ENCODE measurements at regions of chr22 and their contacts with region 1.

Region 1: GRCh38 chr22:20418211-20418788 is 19.3 kb downstream of the SCARF2 start:
- DNase-seq: peak; percentile 83
- H3K4me3 ChIP-seq: peak overlapping the region; percentile 38 to 49 (median 42)
- H3K27ac ChIP-seq: no peak overlapping the region
- H3K4me1 ChIP-seq: no peaks in the 10 kb centered on the region
- H3K27me3 ChIP-seq: peaks cover 2 to 5% of the 10 kb centered on the region in 2 experiments
- CTCF ChIP-seq: peak; percentile 82 to 92
- POLR2A ChIP-seq: no peak

Region 2: DNA sequence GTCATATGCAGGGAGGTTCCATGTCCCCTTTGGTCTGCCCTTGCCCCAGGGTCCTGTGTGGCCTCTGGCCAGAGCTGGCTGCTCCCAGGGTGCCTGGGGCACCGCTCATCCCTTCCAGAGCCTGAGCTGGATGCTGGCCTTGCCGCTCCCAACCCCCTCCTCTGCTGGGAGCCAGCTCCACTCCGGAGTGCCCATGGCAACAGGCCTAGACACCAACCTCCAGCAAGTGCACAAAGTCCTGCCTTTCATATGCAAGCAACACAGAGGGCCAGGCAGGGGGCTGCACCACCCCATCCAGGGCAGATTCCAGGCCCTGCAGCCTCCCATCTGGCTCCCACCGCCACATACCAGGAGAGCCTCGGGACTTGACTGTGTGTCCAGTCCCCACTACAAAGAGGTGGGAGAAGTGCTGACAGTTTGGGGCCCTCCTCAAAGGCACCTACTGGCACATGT is 418.1 kb before region 1 on chr22:
- CTCF ChIA-PET with region 1: no interaction called
- POLR2A ChIA-PET with region 1: no interaction called
- dilution Hi-C with region 1: no loop called
- intact Hi-C with region 1: no loop called
- DNase-seq: no peak
- H3K4me3 ChIP-seq: no peak overlapping the region
- H3K27ac ChIP-seq: peak overlapping the region; percentile 34
- H3K4me1 ChIP-seq: peaks cover 47% of the 10 kb centered on the region
- H3K27me3 ChIP-seq: no peaks in the 10 kb centered on the region
- CTCF ChIP-seq: no peak
- POLR2A ChIP-seq: no peak

Region 3: GRCh38 chr22:20016734-20017621 is 401.3 kb before region 1 on chr22 and contains the start of gene ARVCF:
- CTCF ChIA-PET with region 1: no interaction called
- POLR2A ChIA-PET with region 1: no interaction called
- dilution Hi-C with region 1: no loop called
- intact Hi-C with region 1: no loop called
- DNase-seq: peak; percentile 87
- H3K4me3 ChIP-seq: peak within 1 kb of the TSS; percentile 54 to 79 (median 70)
- H3K27ac ChIP-seq: no peak within 1 kb of the TSS
- H3K4me1 ChIP-seq: peaks cover 18% of the 10 kb centered on the region
- H3K27me3 ChIP-seq: no peaks in the 10 kb centered on the region
- CTCF ChIP-seq: peak in 1 of 2 donors; percentile 31
- POLR2A ChIP-seq: no peak
- total RNA-seq, gene ARVCF: 105 and 109 TPM in 2 replicates

Region 4: DNA sequence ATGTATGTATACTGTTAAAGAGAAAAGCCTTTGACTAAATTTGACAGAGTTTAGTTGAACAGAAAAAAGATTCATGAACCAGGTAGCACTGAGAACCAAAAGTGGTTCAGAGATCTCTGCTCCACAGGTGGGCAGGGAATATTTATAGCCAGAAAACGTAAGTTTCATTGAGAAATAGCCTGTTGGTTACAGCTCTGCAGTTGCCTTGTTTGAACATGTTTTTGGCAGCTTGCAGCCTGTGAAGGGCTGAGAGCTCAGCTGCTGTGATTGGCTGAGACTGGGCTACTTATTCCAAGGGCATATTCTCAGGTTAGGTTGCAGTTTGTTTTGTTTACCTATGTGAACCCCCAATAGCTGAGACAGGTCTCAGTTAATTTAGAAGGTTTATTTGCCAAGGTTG is 37.8 kb before region 1 on chr22:
- CTCF ChIA-PET with region 1: no interaction called
- POLR2A ChIA-PET with region 1: no interaction called
- dilution Hi-C with region 1: no loop called
- intact Hi-C with region 1: no loop called
- DNase-seq: no peak
- H3K4me3 ChIP-seq: no peak overlapping the region
- H3K27ac ChIP-seq: no peak overlapping the region
- H3K4me1 ChIP-seq: no peaks in the 10 kb centered on the region
- H3K27me3 ChIP-seq: peaks cover 6 to 16% of the 10 kb centered on the region in 2 experiments
- CTCF ChIP-seq: no peak
- POLR2A ChIP-seq: no peak

Region 5: GRCh38 chr22:20430720-20431510 is 12.6 kb after region 1 on chr22:
- CTCF ChIA-PET with region 1: interaction called, 36 read pairs
- POLR2A ChIA-PET with region 1: interaction called, 10 read pairs
- dilution Hi-C with region 1: no loop called
- intact Hi-C with region 1: no loop called
- DNase-seq: peak; percentile 44
- H3K4me3 ChIP-seq: peak overlapping the region in 1 of 3 experiments; percentile 9
- H3K27ac ChIP-seq: no peak overlapping the region
- H3K4me1 ChIP-seq: peaks cover 5% of the 10 kb centered on the region
- H3K27me3 ChIP-seq: no peaks in the 10 kb centered on the region
- CTCF ChIP-seq: peak; percentile 40 to 74
- POLR2A ChIP-seq: no peak

Region 6: GRCh38 chr22:20446383-20446970 is 28.2 kb after region 1 on chr22:
- CTCF ChIA-PET with region 1: interaction called, 13 read pairs
- POLR2A ChIA-PET with region 1: no interaction called
- dilution Hi-C with region 1: no loop called
- intact Hi-C with region 1: no loop called
- DNase-seq: no peak
- H3K4me3 ChIP-seq: no peak overlapping the region
- H3K27ac ChIP-seq: no peak overlapping the region
- H3K4me1 ChIP-seq: no peaks in the 10 kb centered on the region
- H3K27me3 ChIP-seq: no peaks in the 10 kb centered on the region
- CTCF ChIP-seq: no peak
- POLR2A ChIP-seq: no peak

Region 7: DNA sequence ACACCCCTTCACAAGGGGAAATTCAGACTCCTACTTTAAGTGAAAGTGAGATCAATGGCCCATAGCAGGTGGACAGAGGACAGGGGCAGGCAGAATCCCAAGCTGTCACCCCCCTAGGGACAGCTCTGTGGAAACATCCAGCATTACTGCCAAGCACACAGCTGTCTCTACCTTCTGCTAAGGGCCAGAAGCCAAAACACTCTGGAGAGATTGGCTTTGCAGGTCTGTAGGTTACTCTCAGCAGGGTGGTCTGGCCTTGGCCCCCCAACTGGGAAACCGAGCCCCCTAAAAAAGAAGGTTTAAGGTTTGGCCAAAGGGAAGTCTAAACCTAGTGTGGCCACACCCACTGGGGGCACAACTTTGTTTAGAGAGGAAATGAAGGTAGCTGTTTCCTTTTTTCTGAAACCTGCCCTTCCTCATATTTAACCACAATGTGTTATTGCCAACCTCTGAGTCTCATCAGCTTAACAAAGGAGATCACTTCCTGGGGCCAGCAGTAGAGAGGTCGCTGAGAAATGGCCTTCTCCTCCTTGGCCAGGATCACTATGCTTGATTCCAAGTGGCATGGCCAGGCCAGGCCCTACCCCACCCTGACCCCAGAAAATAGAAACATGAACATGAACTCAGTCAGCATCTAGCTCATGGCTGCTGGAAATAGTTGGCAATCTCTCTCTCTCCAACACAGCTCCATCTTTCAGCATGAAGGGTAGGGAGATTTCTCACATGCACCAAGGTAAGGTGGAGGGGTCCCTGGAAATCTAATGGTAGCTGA is 45.2 kb after region 1 on chr22:
- CTCF ChIA-PET with region 1: interaction called, 25 read pairs
- POLR2A ChIA-PET with region 1: no interaction called
- dilution Hi-C with region 1: no loop called
- intact Hi-C with region 1: no loop called
- DNase-seq: no peak
- H3K4me3 ChIP-seq: no peak overlapping the region
- H3K27ac ChIP-seq: no peak overlapping the region
- H3K4me1 ChIP-seq: no peaks in the 10 kb centered on the region
- H3K27me3 ChIP-seq: no peaks in the 10 kb centered on the region
- CTCF ChIP-seq: no peak
- POLR2A ChIP-seq: no peak

Region 8: GRCh38 chr22:20568989-20569769 is 150.9 kb after region 1 on chr22:
- CTCF ChIA-PET with region 1: interaction called, 16 read pairs
- POLR2A ChIA-PET with region 1: no interaction called
- dilution Hi-C with region 1: no loop called
- intact Hi-C with region 1: no loop called
- DNase-seq: no peak
- H3K4me3 ChIP-seq: no peak overlapping the region
- H3K27ac ChIP-seq: no peak overlapping the region
- H3K4me1 ChIP-seq: no peaks in the 10 kb centered on the region
- H3K27me3 ChIP-seq: no peaks in the 10 kb centered on the region
- CTCF ChIP-seq: no peak
- POLR2A ChIP-seq: no peak

Measured in endothelial cell of umbilical vein (primary cell).